MCF 10A (cell line): ENCODE measurements at regions of chr5 and their contacts with region 1.

Region 1: DNA sequence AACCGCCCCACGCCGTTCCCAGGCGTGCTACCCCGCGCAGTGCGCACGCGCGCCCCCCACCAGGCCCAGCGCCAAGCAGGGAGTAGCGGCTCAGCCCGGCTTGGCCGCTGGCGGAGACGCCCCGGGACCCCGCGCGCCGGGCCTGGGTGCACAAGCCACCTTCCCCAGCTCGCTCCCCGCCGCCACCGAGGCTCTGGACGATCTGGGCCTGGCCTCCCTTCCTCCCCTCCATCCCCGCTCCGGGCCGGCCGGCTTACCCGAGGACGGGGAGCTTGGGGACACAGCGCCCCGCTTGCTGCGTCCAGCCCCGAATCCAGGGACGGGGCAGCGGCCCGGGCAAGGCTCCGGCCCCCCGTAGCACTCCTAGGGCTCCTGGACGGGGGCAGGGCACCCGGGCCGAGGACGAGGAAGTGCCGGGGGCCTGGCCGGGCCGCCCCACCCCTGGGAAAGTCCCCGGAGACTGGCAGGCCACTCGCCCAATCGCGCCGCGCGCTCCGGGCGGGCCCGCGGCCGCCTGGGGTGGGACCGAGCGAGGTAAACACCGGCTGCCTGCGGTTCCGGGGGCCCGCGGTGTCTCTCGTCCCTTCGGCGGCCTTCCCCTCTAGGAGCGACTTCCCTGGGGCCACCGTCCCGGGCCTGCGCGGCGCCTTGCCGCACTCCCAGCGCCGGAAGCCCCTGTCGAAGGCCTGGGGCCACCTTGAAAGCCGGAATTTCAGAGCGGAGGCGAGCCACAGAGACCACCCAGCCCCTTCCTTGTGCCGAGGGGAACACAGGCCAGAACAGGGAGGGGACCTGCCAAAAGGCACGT is at the start of gene TNIP1:
- DNase-seq: peak; percentile 94
- H3K4me3 Mint-ChIP-seq: peak within 1 kb of the TSS; percentile 74
- H3K27ac Mint-ChIP-seq: peak within 1 kb of the TSS; percentile 59
- H3K4me1 Mint-ChIP-seq: peaks cover 78% of the 10 kb centered on the region
- H3K27me3 Mint-ChIP-seq: no peaks in the 10 kb centered on the region
- CTCF ChIP-seq: no peak
- total RNA-seq, gene TNIP1: 246 and 342 TPM in 2 replicates

Region 2: DNA sequence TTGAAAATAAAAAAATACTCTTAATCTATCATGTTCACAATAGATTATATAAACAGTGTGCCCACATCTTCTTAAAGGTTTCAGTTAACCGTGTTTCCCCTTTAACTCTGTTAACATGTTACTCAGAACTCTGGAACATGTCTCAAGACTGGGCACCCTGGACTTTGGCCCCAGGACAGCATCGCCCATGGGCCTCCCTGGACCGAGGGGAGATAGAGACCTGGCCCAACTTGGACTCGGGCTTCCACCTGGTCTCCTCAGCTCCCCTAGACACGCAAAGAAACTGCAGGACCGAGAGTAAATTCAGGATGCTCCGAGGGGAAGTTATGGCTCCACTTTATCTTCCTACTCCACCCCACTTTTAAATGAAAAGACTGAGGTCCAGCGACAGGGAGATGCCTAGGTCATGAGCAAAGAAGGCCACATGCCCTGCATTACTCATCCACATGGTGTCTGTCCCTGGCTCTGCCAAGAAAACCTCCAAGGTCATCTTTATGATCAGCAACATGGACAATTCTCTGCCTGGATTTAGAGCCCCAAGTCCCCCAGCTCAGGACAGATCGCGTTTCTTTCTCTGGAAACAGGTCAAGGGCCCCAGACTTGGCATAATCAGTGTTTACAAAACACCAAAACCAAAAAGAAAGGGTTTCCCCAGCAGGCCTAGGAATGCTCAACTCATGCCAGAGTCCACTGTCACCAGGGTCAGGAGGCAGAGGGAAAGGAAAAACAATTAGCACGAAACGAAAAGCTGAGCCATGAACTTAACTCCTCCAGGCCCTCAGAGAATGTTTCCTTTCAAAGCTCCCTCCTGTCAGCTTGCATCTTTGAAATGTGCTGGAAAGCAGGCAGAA is 43.0 kb before region 1 on chr5:
- CTCF ChIA-PET with region 1: interaction called, 6 read pairs
- POLR2A ChIA-PET with region 1: interaction called, 16 read pairs
- intact Hi-C with region 1: no loop called
- DNase-seq: no peak
- H3K4me3 Mint-ChIP-seq: no peak overlapping the region
- H3K27ac Mint-ChIP-seq: peak overlapping the region; percentile 75
- H3K4me1 Mint-ChIP-seq: peaks cover 7% of the 10 kb centered on the region
- H3K27me3 Mint-ChIP-seq: no peaks in the 10 kb centered on the region
- CTCF ChIP-seq: no peak

Region 3: GRCh38 chr5:151068433-151069197 is 12.2 kb before region 1 on chr5:
- CTCF ChIA-PET with region 1: interaction called, 24 read pairs
- POLR2A ChIA-PET with region 1: interaction called, 57 read pairs
- intact Hi-C with region 1: no loop called
- DNase-seq: no peak
- H3K4me3 Mint-ChIP-seq: no peak overlapping the region
- H3K27ac Mint-ChIP-seq: peak overlapping the region; percentile 46
- H3K4me1 Mint-ChIP-seq: peaks cover 41% of the 10 kb centered on the region
- H3K27me3 Mint-ChIP-seq: no peaks in the 10 kb centered on the region
- CTCF ChIP-seq: no peak

Region 4: DNA sequence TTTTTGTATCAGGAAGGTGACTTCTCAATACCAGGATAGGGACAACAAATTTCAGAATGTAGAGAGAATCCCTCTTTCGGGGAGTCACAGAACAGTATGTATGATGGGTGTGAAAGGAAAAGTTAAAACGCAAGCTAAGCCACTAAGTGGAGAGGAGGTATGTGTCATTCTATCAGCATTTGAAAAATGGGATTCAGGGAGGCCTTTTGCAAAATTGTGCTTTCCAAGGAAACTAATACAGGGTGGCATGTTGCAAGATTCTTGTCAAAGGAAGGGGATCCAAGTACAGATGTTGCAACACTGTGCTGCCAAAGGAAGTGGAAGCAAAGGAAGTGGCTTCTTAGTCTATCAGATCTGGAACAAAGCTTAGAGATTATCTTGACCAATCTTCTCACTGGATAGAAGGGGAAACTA is 12.7 kb after region 1 on chr5:
- CTCF ChIA-PET with region 1: interaction called, 18 read pairs
- POLR2A ChIA-PET with region 1: interaction called, 78 read pairs
- intact Hi-C with region 1: loop called (anchors 1 kb)
- DNase-seq: peak; percentile 98
- H3K4me3 Mint-ChIP-seq: peak overlapping the region; percentile 28
- H3K27ac Mint-ChIP-seq: peak overlapping the region; percentile 76
- H3K4me1 Mint-ChIP-seq: peaks cover 43% of the 10 kb centered on the region
- H3K27me3 Mint-ChIP-seq: no peaks in the 10 kb centered on the region
- CTCF ChIP-seq: no peak